Right ventricle myocardium inferior (tissue), 1 donor: ENCODE measurements at regions of chr14 and their contacts with region 1.

Region 1: DNA sequence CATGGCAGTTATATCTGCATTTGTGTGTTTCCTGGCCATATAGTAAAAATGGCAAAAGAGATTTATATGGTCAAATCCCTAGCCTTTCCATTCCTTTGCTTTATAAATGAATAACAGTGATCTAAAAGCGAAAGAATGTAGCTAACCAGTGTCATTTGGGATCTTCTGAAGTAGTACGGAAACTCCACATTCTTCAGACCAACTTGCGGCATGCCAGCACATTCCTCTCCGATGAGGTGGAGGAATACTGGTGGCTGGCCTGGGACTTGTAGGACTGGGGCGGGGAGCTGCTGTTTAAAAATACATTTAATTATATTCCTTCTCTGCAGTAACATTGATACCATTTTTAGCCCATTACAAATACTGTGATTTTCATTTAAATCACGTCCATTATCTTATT is 85.3 kb downstream of the SAMD4A start:
- DNase-seq: peak; percentile 88
- ATAC-seq: peak; percentile 94

Region 2: DNA sequence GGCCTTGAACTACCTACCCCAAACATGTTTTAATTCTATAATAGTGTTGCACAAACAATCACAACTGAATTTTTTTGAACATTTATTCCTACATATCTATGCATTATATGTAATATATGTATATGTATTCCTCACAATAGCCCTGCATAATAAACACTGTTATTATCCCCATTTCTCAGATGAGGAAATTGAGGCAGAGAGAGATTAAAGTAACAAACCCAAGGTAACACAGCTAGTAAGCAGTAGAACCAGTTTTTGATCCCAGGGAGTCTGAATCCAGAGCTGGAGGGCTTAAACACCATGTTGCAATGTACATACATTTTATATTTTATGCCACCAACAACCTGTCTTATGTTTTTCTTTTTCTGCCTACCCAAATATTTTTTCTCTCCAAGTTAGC is 669.1 kb before region 1 on chr14:
- intact Hi-C with region 1: no loop called
- DNase-seq: no peak
- ATAC-seq: no peak

Region 3: GRCh38 chr14:54411371-54411770 is 240.8 kb before region 1 on chr14:
- intact Hi-C with region 1: no loop called
- DNase-seq: no peak
- ATAC-seq: no peak

Region 4: GRCh38 chr14:54686219-54686870 is 34.2 kb after region 1 on chr14:
- intact Hi-C with region 1: loop called (anchors 5 kb)
- DNase-seq: no peak
- ATAC-seq: peak; percentile 65